ENCODE measurements at regions of chr2 and their contacts with region 1.

Region 1: GRCh38 chr2:119174216-119175037 is 15.9 kb upstream of the C1QL2 start:
- DNase-seq: peak; percentile 80
- H3K4me3 Mint-ChIP-seq: no peak overlapping the region
- H3K27ac Mint-ChIP-seq: no peak overlapping the region
- H3K4me1 Mint-ChIP-seq: peaks cover 4% of the 10 kb centered on the region
- H3K27me3 Mint-ChIP-seq: peaks cover 16% of the 10 kb centered on the region
- CTCF ChIP-seq: peak; percentile 76

Region 2: GRCh38 chr2:119085613-119086012 is 88.8 kb before region 1 on chr2:
- CTCF ChIA-PET with region 1: no interaction called
- intact Hi-C with region 1: loop called (anchors 10 kb)
- DNase-seq: peak; percentile 51
- H3K4me3 Mint-ChIP-seq: no peak overlapping the region
- H3K27ac Mint-ChIP-seq: no peak overlapping the region
- H3K4me1 Mint-ChIP-seq: peaks cover 24% of the 10 kb centered on the region
- H3K27me3 Mint-ChIP-seq: peaks cover 3% of the 10 kb centered on the region
- CTCF ChIP-seq: no peak